OCI-LY7 (cell line): ENCODE measurements at regions of chr7 and their contacts with region 1.

Region 1: GRCh38 chr7:129091484-129092002 is 36.6 kb upstream of the TNPO3 start:
- DNase-seq: peak; percentile 86
- H3K4me3 ChIP-seq: no peak overlapping the region
- H3K27ac ChIP-seq: peak overlapping the region; percentile 34
- H3K4me1 ChIP-seq: peaks cover 54% of the 10 kb centered on the region
- CTCF ChIP-seq: peak; percentile 100

Region 2: DNA sequence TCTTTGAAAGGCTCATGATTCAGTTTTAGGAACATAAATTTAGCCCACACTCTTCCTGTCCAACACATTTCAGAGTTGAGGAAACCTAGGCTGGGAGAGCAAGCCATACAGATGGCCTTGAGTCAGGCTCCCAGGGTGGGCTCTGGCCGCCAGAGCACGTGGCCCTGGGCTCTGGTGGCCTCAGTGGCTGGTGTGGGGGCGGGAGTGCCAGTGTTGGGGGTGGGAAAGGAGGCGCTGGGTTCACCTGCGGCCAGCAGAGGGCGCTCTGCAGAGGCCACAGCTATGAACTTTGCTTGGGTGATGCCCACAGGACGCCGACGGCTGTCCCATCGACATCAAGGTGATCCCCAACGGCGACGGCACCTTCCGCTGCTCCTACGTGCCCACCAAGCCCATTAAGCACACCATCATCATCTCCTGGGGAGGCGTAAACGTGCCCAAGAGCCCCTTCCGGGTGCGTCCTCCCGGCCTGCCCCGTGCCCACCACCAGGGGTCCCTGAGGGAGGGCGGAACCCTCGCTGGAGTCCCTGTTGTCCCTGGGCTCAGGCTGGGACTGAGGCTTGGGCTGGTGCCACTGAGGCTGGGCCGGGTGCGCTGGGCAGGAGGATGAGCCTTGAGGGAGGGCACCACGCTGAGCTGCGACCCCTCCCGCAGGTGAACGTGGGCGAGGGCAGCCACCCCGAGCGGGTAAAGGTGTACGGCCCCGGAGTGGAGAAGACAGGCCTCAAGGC is 249.5 kb before region 1 on chr7:
- CTCF ChIA-PET with region 1: interaction called, 4 read pairs
- POLR2A ChIA-PET with region 1: no interaction called
- intact Hi-C with region 1: loop called (anchors 2 kb)
- DNase-seq: peak; percentile 66
- H3K4me3 ChIP-seq: no peak overlapping the region
- H3K27ac ChIP-seq: no peak overlapping the region
- H3K4me1 ChIP-seq: peaks cover 3% of the 10 kb centered on the region
- CTCF ChIP-seq: peak; percentile 92

Region 3: DNA sequence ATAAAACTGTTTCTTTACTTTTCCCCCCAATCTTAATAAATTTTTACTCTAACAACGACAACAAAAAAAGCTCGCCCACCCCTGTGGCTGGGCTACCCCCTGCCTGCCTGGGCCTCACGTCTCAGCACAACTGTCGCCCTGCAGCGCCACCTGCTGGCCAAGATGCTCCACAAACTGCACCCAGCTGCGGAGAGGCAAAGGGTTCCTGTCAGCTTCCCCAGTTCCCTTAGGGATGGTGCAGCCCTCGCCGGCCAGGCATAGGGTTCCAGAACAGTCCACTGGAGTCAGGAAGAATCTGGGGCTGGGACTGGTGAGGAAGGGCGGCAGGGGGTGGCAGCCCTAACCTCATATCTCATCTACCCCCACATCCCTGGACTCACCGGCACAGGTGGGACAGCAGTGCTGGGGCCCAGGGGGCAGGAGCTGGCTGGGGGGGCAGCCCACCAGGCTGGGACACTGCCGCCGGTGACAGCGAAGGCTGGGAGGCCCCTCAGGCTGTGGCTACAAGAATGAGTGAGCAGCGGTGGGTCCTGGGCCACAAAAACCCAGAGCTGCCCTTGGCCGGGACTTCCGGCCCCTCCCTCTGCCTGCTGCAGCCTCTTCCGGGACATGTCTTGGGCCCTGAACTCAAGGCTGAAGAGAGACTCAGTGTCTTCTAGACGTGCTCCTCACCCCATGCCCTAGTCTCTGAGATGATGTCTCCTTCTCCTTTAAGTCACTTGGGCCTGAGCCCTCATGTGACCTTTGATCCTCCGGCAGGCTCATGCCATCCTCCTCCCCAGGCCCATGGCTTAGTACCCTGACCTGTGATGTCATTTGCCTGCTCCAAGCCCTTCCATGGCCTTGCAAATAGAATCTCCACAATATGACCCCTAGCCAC is 207.7 kb before region 1 on chr7:
- CTCF ChIA-PET with region 1: interaction called, 3 read pairs
- POLR2A ChIA-PET with region 1: no interaction called
- intact Hi-C with region 1: loop called (anchors 1 kb)
- DNase-seq: peak; percentile 90
- H3K4me3 ChIP-seq: peak overlapping the region; percentile 64
- H3K27ac ChIP-seq: peak overlapping the region; percentile 30
- H3K4me1 ChIP-seq: peaks cover 8% of the 10 kb centered on the region
- CTCF ChIP-seq: peak; percentile 100

Region 4: DNA sequence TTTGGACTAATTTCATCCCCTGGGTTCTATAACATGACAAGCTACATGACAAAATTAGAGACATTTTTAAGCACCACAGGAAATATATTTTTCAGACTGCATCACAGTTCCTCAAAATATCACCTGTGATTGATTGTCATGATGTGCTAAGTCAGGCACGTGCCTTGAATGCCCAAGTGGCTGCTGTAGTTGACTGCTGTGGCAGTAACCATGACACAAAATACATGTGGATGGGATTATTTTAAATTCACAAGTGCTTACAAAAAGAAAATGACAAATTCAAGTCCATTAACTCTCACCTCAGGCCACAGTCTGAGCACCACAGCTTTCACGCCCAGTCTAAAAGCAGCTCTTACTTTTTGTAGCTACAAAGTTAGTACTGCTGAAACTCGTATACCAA is 82.1 kb before region 1 on chr7:
- CTCF ChIA-PET with region 1: no interaction called
- POLR2A ChIA-PET with region 1: interaction called, 9 read pairs
- intact Hi-C with region 1: loop called (anchors 5 kb)
- DNase-seq: peak; percentile 91
- H3K4me3 ChIP-seq: peak overlapping the region; percentile 48
- H3K27ac ChIP-seq: peak overlapping the region; percentile 95
- H3K4me1 ChIP-seq: peaks cover 67% of the 10 kb centered on the region
- CTCF ChIP-seq: no peak

Region 5: GRCh38 chr7:129136887-129137642 is 45.5 kb after region 1 on chr7:
- CTCF ChIA-PET with region 1: no interaction called
- POLR2A ChIA-PET with region 1: interaction called, 7 read pairs
- intact Hi-C with region 1: loop called (anchors 2 kb)
- DNase-seq: peak; percentile 81
- H3K4me3 ChIP-seq: peak overlapping the region; percentile 43
- H3K27ac ChIP-seq: peak overlapping the region; percentile 89
- H3K4me1 ChIP-seq: peaks cover 44% of the 10 kb centered on the region
- CTCF ChIP-seq: no peak

Region 6: DNA sequence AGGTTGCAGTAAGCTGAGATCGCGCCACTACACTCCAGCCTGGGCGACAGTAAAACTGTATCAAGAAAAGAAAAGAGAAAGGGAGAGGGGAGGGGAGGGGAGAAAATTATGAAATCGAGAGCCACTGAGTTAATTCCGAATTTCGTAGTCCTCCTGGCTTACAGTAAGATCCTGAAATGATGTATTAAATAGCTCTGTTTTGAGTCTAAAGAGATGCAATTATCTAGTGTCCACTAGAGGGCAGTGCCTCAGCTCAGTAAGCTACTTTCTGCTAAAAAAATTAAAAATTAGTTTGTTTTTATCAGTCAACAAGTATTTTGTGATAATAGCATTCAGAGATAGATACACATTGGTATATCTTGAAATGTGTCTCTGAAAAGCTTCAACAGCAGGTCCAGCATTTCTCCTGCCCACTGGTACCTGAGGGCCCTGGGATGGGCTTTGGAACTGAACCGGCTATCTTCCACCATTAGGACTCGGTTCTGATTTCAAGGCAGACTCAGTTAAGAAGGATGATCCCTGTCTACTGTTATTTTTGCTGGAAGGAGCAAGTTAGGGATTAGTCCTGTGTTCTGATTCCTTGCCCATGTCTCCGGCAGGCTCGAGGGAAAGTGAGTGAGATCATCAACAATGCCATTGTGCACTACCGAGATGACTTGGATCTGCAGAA is 72.5 kb after region 1 on chr7:
- CTCF ChIA-PET with region 1: no interaction called
- POLR2A ChIA-PET with region 1: interaction called, 3 read pairs
- intact Hi-C with region 1: loop called (anchors 2 kb)
- DNase-seq: peak; percentile 69
- H3K4me3 ChIP-seq: no peak overlapping the region
- H3K27ac ChIP-seq: no peak overlapping the region
- H3K4me1 ChIP-seq: peaks cover 51% of the 10 kb centered on the region
- CTCF ChIP-seq: peak; percentile 98

Region 7: DNA sequence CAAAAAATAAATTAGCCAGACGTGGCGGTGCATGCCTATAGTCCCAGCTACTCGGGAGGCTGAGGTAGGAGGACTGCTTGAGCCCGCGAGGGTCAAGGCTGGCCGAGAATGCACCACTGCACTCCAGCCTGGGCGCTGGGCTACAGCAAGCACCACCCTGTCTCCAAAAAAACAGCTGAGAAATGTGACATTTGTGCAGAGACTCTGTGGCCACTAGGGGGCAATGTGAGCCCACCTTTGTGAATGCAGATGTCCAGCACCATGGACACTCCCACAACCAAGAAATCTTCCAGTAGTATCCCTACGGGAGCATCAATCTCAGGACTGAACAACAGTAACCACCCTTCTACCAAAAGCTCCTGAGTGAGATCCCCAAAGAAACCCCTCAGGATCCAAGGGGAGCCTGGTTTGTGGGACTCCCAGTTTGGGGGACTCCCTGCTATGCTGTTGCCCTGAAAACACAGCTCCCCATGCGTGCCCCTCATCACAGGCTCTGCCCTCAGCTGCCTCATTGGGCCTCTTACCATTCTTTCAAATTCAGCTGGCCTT is 127.0 kb after region 1 on chr7:
- CTCF ChIA-PET with region 1: no interaction called
- POLR2A ChIA-PET with region 1: no interaction called
- intact Hi-C with region 1: no loop called
- DNase-seq: peak; percentile 82
- H3K4me3 ChIP-seq: no peak overlapping the region
- H3K27ac ChIP-seq: no peak overlapping the region
- H3K4me1 ChIP-seq: peaks cover 15% of the 10 kb centered on the region
- CTCF ChIP-seq: peak; percentile 95